CD4-positive, alpha-beta memory T cell (primary cell): ENCODE measurements at regions of chr9 and their contacts with region 1.

Region 1: DNA sequence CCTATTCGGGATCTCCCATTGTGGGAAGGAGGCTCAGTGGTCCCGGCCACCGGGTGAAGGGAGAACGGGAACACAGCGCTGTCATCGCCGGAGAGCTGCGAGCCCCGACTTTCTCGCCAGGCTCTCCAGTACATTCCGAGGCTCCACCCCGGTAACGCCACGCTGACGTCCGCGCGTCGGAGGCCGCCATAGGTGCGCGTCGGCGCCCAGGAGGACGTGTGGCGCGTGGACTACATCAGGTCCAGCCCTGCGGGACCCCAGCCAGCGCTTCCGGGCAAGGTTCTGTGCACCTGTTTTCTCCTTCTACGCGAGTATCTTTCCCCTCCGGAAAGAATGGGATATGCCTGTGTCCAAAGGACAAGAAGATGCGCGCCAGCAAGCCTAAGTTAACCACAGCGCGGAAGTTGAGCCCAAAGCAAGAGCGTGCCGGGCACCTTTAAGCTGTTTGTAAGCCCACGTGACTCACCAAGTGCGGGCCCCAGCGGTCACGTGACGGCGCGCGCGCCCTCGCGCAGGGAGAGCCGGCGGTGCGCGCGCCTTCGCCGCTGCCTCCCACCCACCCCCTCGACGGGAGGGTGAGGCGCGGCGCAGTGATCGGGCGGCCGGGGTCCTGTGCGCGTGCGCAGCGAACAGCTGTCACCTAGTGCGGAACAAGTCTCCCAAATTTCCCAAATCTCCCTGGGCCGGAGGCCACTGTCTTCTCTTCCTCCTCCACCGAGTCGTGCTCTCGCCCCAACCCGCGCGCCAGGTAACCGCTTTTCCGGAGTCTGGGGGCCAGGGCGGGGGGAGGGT is at the start of gene KDM4C:
- DNase-seq: peak; percentile 94 to 96 (median 94)
- H3K4me3 ChIP-seq: peak within 1 kb of the TSS; percentile 66 to 82
- H3K4me3 Mint-ChIP-seq: peak within 1 kb of the TSS; percentile 95 to 99 (median 98)
- H3K27ac ChIP-seq: peak within 1 kb of the TSS; percentile 92
- H3K27ac Mint-ChIP-seq: peak within 1 kb of the TSS; percentile 97 to 100 (median 100)
- H3K4me1 ChIP-seq: peaks cover 22% of the 10 kb centered on the region
- H3K4me1 Mint-ChIP-seq: peaks cover 21 to 51% (median 31%) of the 10 kb centered on the region in 4 donors
- H3K27me3 ChIP-seq: no peaks in the 10 kb centered on the region
- H3K27me3 Mint-ChIP-seq: no peaks in the 10 kb centered on the region
- total RNA-seq, gene KDM4C: 80.5 to 90.7 TPM

Region 2: GRCh38 chr9:5389109-5389732 is 1368.4 kb before region 1 on chr9:
- CTCF ChIA-PET with region 1: no interaction called
- POLR2A ChIA-PET with region 1: no interaction called
- intact Hi-C with region 1: no loop called
- DNase-seq: no peak
- H3K4me3 ChIP-seq: no peak overlapping the region
- H3K4me3 Mint-ChIP-seq: no peak overlapping the region
- H3K27ac ChIP-seq: no peak overlapping the region
- H3K27ac Mint-ChIP-seq: peak overlapping the region in 1 of 7 donors; percentile 51
- H3K4me1 ChIP-seq: peaks cover 5% of the 10 kb centered on the region
- H3K4me1 Mint-ChIP-seq: peaks cover 14 to 34% (median 25%) of the 10 kb centered on the region in 4 donors
- H3K27me3 ChIP-seq: no peaks in the 10 kb centered on the region
- H3K27me3 Mint-ChIP-seq: no peaks in the 10 kb centered on the region

Region 3: GRCh38 chr9:6584881-6585597 is 172.6 kb before region 1 on chr9:
- CTCF ChIA-PET with region 1: interaction called, 3 read pairs
- POLR2A ChIA-PET with region 1: interaction called, 3 read pairs
- intact Hi-C with region 1: loop called (anchors 5 kb)
- DNase-seq: peak in 4 of 5 donors; percentile 16 to 31 (median 24)
- H3K4me3 ChIP-seq: no peak overlapping the region
- H3K4me3 Mint-ChIP-seq: no peak overlapping the region
- H3K27ac ChIP-seq: no peak overlapping the region
- H3K27ac Mint-ChIP-seq: no peak overlapping the region
- H3K4me1 ChIP-seq: no peaks in the 10 kb centered on the region
- H3K4me1 Mint-ChIP-seq: no peaks in the 10 kb centered on the region
- H3K27me3 ChIP-seq: no peaks in the 10 kb centered on the region
- H3K27me3 Mint-ChIP-seq: no peaks in the 10 kb centered on the region

Region 4: DNA sequence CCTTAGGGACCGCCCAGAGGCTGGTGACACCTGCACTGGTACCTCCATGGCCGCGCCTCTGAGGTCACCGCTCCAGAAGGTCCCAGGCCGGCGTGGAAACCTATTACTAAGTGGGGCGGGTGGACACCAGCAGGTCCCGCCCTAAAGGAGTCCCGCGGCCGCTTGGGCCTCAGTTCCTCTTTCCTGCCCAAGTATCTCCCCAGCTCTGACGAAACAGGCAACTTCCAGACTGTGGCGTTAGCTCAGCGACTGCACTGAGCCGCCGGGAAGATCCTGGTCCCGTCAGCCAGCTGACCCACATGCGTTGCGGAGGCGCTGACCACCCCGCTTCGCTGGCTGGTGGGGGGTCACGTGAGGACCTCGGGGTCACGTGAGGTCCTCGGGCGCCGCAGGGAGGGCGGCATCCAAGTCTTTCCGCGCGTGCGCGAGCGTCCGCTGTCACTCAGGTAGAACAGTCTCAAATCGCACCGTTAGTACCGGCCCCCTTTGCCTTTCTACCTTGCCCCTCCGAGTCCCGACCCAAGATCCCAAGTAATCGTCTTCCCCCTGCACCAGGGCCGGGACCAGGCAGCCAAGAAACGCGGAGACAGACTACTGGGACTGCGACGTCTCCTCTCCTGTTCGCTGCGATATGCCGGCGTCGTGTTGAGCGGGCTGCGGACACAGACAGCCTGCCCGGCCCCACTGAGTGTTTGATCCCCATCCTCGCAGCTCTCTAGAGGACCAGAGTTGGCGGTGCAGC is 53.6 kb before region 1 on chr9:
- CTCF ChIA-PET with region 1: no interaction called
- POLR2A ChIA-PET with region 1: interaction called, 83 read pairs
- intact Hi-C with region 1: loop called (anchors 1 kb)
- DNase-seq: peak; percentile 75 to 78 (median 78)
- H3K4me3 ChIP-seq: peak overlapping the region; percentile 86 to 91
- H3K4me3 Mint-ChIP-seq: peak overlapping the region; percentile 91 to 98 (median 95)
- H3K27ac ChIP-seq: peak overlapping the region; percentile 92
- H3K27ac Mint-ChIP-seq: peak overlapping the region; percentile 93 to 99 (median 96)
- H3K4me1 ChIP-seq: peaks cover 12% of the 10 kb centered on the region
- H3K4me1 Mint-ChIP-seq: peaks cover 2 to 15% (median 11%) of the 10 kb centered on the region in 4 donors
- H3K27me3 ChIP-seq: no peaks in the 10 kb centered on the region
- H3K27me3 Mint-ChIP-seq: peaks cover 0 to 1% of the 10 kb centered on the region in 2 donors

Region 5: GRCh38 chr9:6811436-6811835 is 53.8 kb after region 1 on chr9:
- CTCF ChIA-PET with region 1: no interaction called
- POLR2A ChIA-PET with region 1: interaction called, 5 read pairs
- intact Hi-C with region 1: loop called (anchors 2 kb)
- DNase-seq: no peak
- H3K4me3 ChIP-seq: no peak overlapping the region
- H3K4me3 Mint-ChIP-seq: no peak overlapping the region
- H3K27ac ChIP-seq: no peak overlapping the region
- H3K27ac Mint-ChIP-seq: no peak overlapping the region
- H3K4me1 ChIP-seq: no peaks in the 10 kb centered on the region
- H3K4me1 Mint-ChIP-seq: peaks cover 0 to 11% (median 6%) of the 10 kb centered on the region in 4 donors
- H3K27me3 ChIP-seq: no peaks in the 10 kb centered on the region
- H3K27me3 Mint-ChIP-seq: no peaks in the 10 kb centered on the region